Tibial artery (tissue), 4 donors: ENCODE measurements at regions of chr1 and their contacts with region 1.

Region 1: GRCh38 chr1:184881941-184882913 is 92.1 kb downstream of the NIBAN1 start:
- DNase-seq: peak; percentile 65 to 87
- H3K4me3 ChIP-seq: no peak overlapping the region
- H3K27ac ChIP-seq: peak overlapping the region; percentile 80 to 85
- H3K4me1 ChIP-seq: peaks cover 0 to 94% (median 41%) of the 10 kb centered on the region in 4 donors
- H3K27me3 ChIP-seq: no peaks in the 10 kb centered on the region
- CTCF ChIP-seq: no peak

Region 2: GRCh38 chr1:184724843-184725242 is 157.4 kb before region 1 on chr1:
- intact Hi-C with region 1: no loop called
- DNase-seq: no peak
- H3K4me3 ChIP-seq: no peak overlapping the region
- H3K27ac ChIP-seq: no peak overlapping the region
- H3K4me1 ChIP-seq: no peaks in the 10 kb centered on the region
- H3K27me3 ChIP-seq: no peaks in the 10 kb centered on the region
- CTCF ChIP-seq: no peak

Region 3: DNA sequence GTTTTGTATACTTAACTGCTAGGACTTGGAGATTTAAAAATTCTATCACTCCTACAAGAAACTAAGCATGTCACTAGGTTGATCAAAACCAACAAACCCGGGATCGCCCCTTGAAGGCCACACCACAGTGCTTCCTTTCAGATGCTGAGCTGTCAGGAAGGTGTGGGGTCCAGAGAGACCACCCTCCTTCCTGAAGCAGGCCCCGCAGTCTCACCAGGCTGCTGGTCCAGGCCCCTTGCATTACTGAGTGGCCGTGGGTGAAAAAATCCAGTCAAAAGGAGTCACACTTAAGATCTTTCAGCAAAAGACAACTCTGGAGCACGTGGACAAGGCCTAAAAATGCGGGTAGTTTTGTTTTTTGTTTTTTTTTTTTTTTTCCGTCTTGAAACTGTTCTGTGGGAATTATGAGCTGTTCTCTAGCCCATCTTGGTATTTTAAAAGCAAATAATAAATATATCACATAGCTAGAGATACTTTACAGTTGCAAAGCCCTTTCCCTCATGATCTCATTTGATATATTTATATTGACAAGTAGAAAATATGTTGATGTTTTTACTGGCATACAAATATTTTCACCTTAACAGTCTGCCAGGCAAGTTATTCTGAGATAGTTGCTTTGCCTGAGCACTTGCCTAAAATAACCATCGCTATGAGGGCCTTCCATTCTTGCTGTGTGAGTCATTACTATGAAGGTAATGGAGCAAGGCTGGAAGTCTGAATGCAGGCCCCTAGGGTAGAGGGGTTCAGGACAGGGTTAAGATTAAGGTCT is 54.4 kb before region 1 on chr1:
- intact Hi-C with region 1: loop called (anchors 10 kb)
- DNase-seq: no peak
- H3K4me3 ChIP-seq: no peak overlapping the region
- H3K27ac ChIP-seq: peak overlapping the region; percentile 73 to 81
- H3K4me1 ChIP-seq: peaks cover 0 to 80% (median 54%) of the 10 kb centered on the region in 4 donors
- H3K27me3 ChIP-seq: no peaks in the 10 kb centered on the region
- CTCF ChIP-seq: no peak

Region 4: GRCh38 chr1:184945029-184945428 is 62.8 kb after region 1 on chr1:
- intact Hi-C with region 1: no loop called
- DNase-seq: no peak
- H3K4me3 ChIP-seq: no peak overlapping the region
- H3K27ac ChIP-seq: peak overlapping the region; percentile 71 to 78
- H3K4me1 ChIP-seq: peaks cover 0 to 68% (median 38%) of the 10 kb centered on the region in 4 donors
- H3K27me3 ChIP-seq: no peaks in the 10 kb centered on the region
- CTCF ChIP-seq: no peak

Region 5: DNA sequence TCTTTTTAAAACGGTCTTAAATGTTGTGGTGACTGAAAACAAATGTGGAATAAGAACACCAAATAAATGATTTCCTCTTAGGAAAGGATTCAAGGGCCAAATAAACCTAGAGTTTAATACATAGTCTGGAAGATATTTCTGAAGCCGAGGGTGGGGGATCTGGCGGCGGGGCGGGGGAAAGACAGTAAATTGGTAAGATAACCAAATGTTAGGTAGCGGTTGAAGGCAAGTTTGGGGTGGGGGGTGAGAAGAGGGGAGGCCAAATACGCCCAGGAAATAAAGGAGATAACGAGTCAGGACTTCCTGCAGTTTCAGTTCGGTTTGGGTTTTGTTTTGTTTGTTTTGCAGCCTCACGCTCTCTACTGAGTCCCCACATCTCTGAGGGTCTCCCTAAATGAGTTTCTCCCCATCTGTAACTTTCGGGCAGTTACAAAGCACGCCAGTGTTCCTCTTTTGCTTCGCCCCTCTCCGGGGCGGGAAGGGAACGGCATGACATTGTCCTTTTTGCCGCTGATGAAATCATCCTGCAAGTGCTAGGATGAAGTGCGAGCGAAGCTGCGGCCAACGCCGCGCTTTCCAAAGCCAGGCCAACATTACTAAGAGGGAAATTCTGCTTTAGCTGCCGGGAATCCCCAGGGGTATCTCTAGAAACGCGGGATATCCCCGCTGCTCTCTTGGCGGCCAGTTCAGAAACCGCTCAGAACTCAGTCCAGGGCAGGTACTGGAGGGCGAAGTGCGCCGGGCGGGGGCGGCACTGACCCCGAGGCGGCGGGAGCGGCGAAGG is 91.2 kb after region 1 on chr1:
- intact Hi-C with region 1: loop called (anchors 10 kb)
- DNase-seq: peak; percentile 47 to 77
- H3K4me3 ChIP-seq: peak overlapping the region; percentile 92 to 97
- H3K27ac ChIP-seq: peak overlapping the region; percentile 93 to 95
- H3K4me1 ChIP-seq: peaks cover 0 to 50% (median 26%) of the 10 kb centered on the region in 4 donors
- H3K27me3 ChIP-seq: no peaks in the 10 kb centered on the region
- CTCF ChIP-seq: no peak